Endothelial cell of umbilical vein (primary cell): ENCODE measurements at regions of chr3 and their contacts with region 1.

Region 1: DNA sequence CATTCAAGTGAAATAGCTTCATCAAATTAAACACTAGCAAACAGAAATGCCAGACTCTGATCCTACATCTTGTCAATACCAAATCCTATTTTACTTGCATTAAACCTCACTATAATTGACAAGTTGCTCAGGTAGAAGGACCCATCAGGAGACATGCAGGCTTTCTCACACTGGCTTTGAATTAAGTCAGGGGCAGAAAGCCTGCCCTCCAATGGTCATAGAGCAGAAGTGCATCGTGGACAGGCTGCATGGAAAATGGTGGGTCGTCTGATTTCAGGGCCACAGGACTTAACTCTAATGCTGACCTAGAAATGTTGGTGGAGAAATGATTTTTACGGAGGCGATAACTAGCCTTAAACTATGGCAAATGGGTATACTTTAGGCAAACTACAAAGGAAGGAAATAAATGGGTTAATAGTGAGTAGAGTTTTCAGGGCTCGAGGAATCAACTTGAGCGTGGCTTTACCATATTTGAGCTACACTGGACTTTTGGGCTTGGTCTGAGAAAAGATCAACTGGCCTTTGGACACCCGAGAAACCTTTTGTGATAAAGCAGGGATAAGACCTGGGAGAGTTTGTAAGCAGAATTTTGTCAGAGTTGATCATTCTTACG is 283.9 kb downstream of the GRM7 start:
- DNase-seq: peak; percentile 36
- H3K4me3 ChIP-seq: no peak overlapping the region
- H3K27ac ChIP-seq: no peak overlapping the region
- H3K4me1 ChIP-seq: no peaks in the 10 kb centered on the region
- H3K27me3 ChIP-seq: no peaks in the 10 kb centered on the region
- CTCF ChIP-seq: peak; percentile 63 to 68
- POLR2A ChIP-seq: no peak

Region 2: GRCh38 chr3:5226783-5227182 is 1918.0 kb before region 1 on chr3:
- CTCF ChIA-PET with region 1: interaction called, 3 read pairs
- POLR2A ChIA-PET with region 1: no interaction called
- dilution Hi-C with region 1: no loop called
- intact Hi-C with region 1: loop called (anchors 2 kb)
- DNase-seq: peak; percentile 24
- H3K4me3 ChIP-seq: no peak overlapping the region
- H3K27ac ChIP-seq: no peak overlapping the region
- H3K4me1 ChIP-seq: no peaks in the 10 kb centered on the region
- H3K27me3 ChIP-seq: no peaks in the 10 kb centered on the region
- CTCF ChIP-seq: peak in 1 of 2 donors; percentile 17
- POLR2A ChIP-seq: no peak

Region 3: DNA sequence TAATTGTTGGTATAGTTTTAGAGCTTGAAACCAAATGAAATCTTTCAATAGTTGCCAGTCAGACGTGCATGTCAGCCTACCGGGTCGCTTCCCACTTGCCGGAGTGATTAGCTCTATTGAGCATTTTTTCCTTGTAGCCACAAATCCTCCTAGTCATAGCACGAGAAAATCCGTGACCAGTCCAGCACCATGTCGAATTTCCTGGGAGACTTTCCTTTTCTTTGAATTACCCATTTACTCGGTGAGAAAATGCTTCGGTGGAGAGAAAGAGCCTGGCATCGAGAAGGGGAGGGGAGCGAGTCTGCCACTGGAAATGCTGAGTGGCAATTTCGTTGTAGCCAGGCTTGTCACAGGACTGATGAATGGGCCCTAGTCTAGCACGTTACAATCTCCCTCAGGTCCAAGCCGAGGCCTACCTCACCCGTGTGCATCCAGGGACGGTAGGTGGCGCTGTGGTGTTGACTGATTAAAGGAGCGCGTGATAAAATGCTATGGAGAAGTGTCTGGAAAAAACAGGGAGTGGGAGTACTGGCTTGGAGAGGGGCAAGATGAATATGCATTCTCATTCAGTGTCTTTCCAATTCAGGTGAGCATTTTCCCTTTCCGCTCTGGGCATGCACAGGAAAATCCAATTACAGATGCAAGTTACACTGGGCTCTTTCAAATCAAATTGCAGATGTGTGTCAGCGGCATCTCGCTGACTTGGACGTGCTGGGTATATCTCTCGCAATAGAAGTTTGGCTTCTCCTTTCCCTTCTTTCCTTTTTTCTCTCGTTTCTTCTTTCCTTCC is 1718.5 kb before region 1 on chr3:
- CTCF ChIA-PET with region 1: no interaction called
- POLR2A ChIA-PET with region 1: no interaction called
- dilution Hi-C with region 1: no loop called
- intact Hi-C with region 1: loop called (anchors 2 kb)
- DNase-seq: peak; percentile 45
- H3K4me3 ChIP-seq: no peak overlapping the region
- H3K27ac ChIP-seq: no peak overlapping the region
- H3K4me1 ChIP-seq: no peaks in the 10 kb centered on the region
- H3K27me3 ChIP-seq: no peaks in the 10 kb centered on the region
- CTCF ChIP-seq: peak; percentile 78 to 85
- POLR2A ChIP-seq: no peak

Region 4: DNA sequence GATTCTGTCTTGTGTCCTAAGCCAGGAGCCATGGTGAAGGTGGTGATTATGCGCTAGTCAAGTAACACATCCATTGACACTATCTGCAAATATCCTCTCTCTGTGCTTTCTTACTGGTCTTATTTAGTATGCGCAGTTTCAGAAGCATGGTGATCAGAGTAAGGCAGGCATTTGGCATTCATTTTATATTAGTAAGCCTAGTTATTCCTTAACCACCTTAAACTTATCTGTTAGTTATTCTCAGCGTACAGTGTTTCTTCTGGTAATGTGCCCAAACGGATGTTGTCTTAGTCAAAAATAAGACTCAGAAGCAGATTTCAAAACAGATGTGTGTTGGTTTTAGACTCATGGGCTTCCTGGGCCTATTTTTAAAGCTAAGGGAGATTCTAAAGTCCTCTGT is 45.3 kb after region 1 on chr3:
- CTCF ChIA-PET with region 1: no interaction called
- POLR2A ChIA-PET with region 1: no interaction called
- dilution Hi-C with region 1: no loop called
- intact Hi-C with region 1: no loop called
- DNase-seq: peak; percentile 59
- H3K4me3 ChIP-seq: no peak overlapping the region
- H3K27ac ChIP-seq: no peak overlapping the region
- H3K4me1 ChIP-seq: peaks cover 2% of the 10 kb centered on the region
- H3K27me3 ChIP-seq: no peaks in the 10 kb centered on the region
- CTCF ChIP-seq: no peak
- POLR2A ChIP-seq: no peak

Region 5: GRCh38 chr3:7546253-7546652 is 401.5 kb after region 1 on chr3:
- CTCF ChIA-PET with region 1: no interaction called
- POLR2A ChIA-PET with region 1: no interaction called
- dilution Hi-C with region 1: no loop called
- intact Hi-C with region 1: loop called (anchors 10 kb)
- DNase-seq: peak; percentile 79
- H3K4me3 ChIP-seq: no peak overlapping the region
- H3K27ac ChIP-seq: no peak overlapping the region
- H3K4me1 ChIP-seq: no peaks in the 10 kb centered on the region
- H3K27me3 ChIP-seq: no peaks in the 10 kb centered on the region
- CTCF ChIP-seq: peak; percentile 6 to 13
- POLR2A ChIP-seq: no peak